ENCODE measurements at regions of chr6 and their contacts with region 1.

Region 1: GRCh38 chr6:31958741-31959739 is at the starts of genes NELFE and SKIC2:
- DNase-seq: peak; percentile 99
- H3K4me3 Mint-ChIP-seq: peak within 1 kb of the TSS; percentile 91
- H3K27ac Mint-ChIP-seq: peak within 1 kb of the TSS; percentile 97
- H3K4me1 Mint-ChIP-seq: peaks cover 38% of the 10 kb centered on the region
- H3K27me3 Mint-ChIP-seq: no peaks in the 10 kb centered on the region
- total RNA-seq, gene NELFE: 65.2 to 72.3 TPM
- total RNA-seq, gene SKIC2: 88.0 to 101 TPM

Region 2: GRCh38 chr6:31621991-31622390 is 337.0 kb before region 1 on chr6:
- CTCF ChIA-PET with region 1: no interaction called
- POLR2A ChIA-PET with region 1: no interaction called
- DNase-seq: no peak
- H3K4me3 Mint-ChIP-seq: peak overlapping the region; percentile 86
- H3K27ac Mint-ChIP-seq: peak overlapping the region; percentile 92
- H3K4me1 Mint-ChIP-seq: peaks cover 32% of the 10 kb centered on the region
- H3K27me3 Mint-ChIP-seq: no peaks in the 10 kb centered on the region

Region 3: GRCh38 chr6:31971993-31972708 is 13.1 kb after region 1 on chr6 and contains the start of gene DXO:
- CTCF ChIA-PET with region 1: interaction called, 19 read pairs
- POLR2A ChIA-PET with region 1: interaction called, 7 read pairs
- DNase-seq: peak; percentile 98
- H3K4me3 Mint-ChIP-seq: peak within 1 kb of the TSS; percentile 90
- H3K27ac Mint-ChIP-seq: peak within 1 kb of the TSS; percentile 99
- H3K4me1 Mint-ChIP-seq: peaks cover 37% of the 10 kb centered on the region
- H3K27me3 Mint-ChIP-seq: no peaks in the 10 kb centered on the region
- total RNA-seq, gene DXO: 20.4 to 21.8 TPM